Breast epithelium (tissue), 4 donors: ENCODE measurements at regions of chrX and their contacts with region 1.

Region 1: DNA sequence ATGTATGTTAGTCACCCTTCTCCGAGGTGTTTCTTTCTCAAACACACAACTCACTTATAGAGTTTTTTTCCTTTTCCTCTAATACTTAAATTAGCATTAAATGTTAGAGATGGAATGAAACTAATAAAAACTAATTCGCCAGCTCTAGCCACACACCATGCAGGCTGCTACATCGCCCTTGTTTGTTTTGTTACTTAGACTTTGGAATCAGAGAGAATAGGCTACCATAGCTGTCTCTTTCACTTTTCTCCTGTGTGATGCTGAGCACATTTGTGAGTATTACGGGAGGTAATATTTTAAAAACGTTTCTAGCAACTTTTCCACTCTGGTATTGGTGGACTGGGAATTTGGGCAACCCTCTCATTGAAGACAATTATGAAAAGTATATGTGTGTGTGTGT is 43.5 kb downstream of the ESX1 start:
- DNase-seq: no peak
- H3K4me3 ChIP-seq: no peak overlapping the region
- H3K27ac ChIP-seq: no peak overlapping the region
- H3K4me1 ChIP-seq: no peaks in the 10 kb centered on the region
- H3K27me3 ChIP-seq: peaks cover 0 to 45% of the 10 kb centered on the region in 2 donors
- CTCF ChIP-seq: no peak
- POLR2A ChIP-seq: no peak

Region 2: DNA sequence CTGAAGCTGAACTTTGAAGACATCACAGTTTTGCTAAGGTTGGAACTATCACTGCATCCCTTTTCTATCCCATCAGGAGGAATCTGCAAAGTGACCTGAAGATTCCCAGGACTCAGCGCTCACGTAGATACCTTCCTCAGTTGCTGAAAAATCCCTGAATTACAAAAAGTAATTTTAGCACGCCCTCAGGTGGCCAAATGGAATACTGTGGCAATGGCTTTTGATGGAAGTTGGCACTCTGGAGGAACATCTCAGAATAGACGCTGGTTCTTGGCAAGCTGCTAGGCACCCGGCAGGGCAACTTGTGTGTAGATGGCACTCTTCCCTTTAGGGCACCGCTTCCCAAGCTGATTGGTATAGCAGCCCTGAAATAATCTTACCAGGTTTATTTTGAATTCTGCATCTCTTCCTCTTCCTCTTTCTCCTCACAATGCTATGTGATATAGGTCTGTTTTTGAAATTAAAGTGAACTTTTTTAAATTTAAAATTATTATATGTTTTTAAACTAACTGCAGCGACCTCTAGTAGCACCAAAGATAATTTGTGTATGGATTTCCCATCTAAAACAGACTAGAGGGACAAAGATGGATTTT is 59.8 kb after region 1 on chrX:
- intact Hi-C with region 1: loop called (anchors 2 kb)
- DNase-seq: peak in 1 of 2 donors; percentile 22
- H3K4me3 ChIP-seq: peak overlapping the region in 2 of 3 donors; percentile 2 to 15
- H3K27ac ChIP-seq: no peak overlapping the region
- H3K4me1 ChIP-seq: no peaks in the 10 kb centered on the region
- H3K27me3 ChIP-seq: peaks cover 0 to 44% of the 10 kb centered on the region in 2 donors
- CTCF ChIP-seq: peak; percentile 7 to 30 (median 23)
- POLR2A ChIP-seq: no peak